Right ventricle myocardium superior (tissue), 1 donor: ENCODE measurements at regions of chr9 and their contacts with region 1.

Region 1: GRCh38 chr9:4690144-4690543 is 10.8 kb downstream of the CDC37L1 start:
- DNase-seq: no peak
- ATAC-seq: no peak

Region 2: GRCh38 chr9:3647652-3648051 is 1042.5 kb before region 1 on chr9:
- intact Hi-C with region 1: no loop called
- DNase-seq: no peak
- ATAC-seq: no peak

Region 3: GRCh38 chr9:4422495-4422894 is 267.6 kb before region 1 on chr9:
- intact Hi-C with region 1: no loop called
- DNase-seq: no peak
- ATAC-seq: no peak

Region 4: GRCh38 chr9:4734150-4734549 is 44.0 kb after region 1 on chr9:
- intact Hi-C with region 1: loop called (anchors 5 kb)
- DNase-seq: no peak
- ATAC-seq: no peak